Right cardiac atrium (tissue), 5 donors: ENCODE measurements at regions of chr1 and their contacts with region 1.

Region 1: DNA sequence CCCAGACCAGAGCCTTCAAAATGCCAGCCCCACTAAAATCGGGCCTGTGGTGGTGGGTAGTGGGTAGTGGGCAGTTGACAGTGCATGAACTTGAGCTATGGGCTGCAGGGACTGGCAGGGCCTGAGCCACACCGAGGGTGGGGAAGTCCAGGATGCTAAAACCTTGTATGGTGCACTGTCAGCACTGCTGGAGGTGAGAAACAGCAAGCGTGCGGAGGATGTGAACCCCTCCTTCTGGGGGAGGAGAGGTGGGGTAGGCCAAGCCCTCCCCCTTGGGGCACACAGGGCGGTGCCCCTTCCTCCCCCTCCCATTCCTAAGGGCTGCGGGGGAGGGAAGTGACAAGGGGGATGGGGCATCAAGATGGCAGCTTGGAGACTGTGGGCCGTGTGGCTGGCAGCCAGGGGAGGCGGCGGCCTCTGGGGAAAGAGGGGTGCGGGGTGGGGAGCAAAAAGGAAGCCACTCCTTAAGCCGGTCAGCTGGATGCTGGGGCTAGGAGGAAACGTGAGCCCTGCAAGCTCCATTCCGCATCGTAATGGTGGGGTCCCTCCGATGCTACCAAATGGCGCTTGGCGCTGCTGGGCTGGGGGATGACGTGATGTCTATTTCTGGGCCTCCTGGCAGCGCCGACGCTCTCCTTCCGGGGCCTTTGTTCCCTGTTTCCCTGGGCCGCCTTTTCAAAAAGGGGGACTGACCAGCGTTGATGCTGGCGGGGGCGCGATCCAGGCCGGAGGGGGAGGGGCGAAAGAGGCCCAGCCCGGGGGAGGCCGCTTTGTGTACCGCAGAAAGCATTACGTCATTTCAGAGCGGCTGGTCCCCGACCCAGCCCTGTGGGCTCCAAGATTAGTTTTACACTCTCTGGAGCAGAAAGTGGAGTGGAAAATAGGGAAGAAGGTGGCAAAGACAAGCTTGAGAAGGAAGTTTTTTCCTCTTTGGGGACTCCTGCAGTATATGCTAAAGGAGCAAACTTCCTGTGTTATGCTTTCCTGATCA is 809 bp downstream of the SYT11 start:
- DNase-seq: peak; percentile 93 to 96 (median 95)
- ATAC-seq: peak; percentile 72 to 74
- H3K4me3 ChIP-seq: peak overlapping the region; percentile 43
- H3K27ac ChIP-seq: peak overlapping the region; percentile 86
- H3K4me1 ChIP-seq: no peaks in the 10 kb centered on the region
- H3K27me3 ChIP-seq: no peaks in the 10 kb centered on the region

Region 2: DNA sequence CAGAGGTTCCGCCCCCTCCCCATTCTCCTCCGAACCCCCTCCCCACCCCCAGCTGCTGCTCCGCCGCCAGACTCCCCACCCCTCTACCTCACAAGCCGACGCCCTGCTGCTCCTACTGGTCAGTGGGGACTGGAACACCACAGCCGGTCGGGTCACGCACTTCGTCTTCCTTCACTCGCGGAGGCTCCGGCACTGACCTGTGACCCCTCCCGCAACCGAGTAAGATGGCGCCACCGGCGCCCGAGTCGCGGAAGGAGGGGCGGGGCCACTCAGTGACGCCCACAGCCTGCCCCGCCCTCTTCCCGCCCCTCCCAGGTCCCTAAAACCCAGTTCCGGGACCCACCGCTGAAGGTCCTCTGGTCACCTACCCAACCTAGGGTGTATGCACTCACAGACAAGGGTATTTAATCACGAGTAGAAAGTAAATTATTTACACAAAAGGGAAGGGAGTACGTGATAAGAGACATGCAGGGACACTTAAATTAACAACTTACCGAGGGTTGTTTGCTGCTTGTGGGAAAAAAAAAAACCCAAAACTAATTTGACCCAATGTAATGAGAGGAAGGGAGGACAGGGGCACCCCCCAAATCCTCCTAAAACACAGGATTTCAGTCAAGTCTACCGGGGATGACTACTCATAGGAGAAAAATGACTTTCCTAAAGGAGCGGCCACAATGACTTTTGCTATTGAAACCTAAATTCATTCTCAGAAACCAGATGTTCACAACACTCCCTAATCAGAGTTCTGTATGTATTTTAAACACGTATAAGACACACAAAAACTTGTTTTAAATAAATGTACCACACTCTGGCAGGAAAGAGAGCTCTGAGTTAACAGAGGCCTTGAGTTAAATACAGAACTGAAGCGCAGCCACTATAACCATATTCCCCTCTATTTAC is 51.2 kb after region 1 on chr1 and contains the start of gene RIT1:
- intact Hi-C with region 1: loop called in 1 of 4 experiments (anchors 10 kb)
- DNase-seq: peak; percentile 90 to 95 (median 95)
- ATAC-seq: peak; percentile 98
- H3K4me3 ChIP-seq: peak within 1 kb of the TSS; percentile 96
- H3K27ac ChIP-seq: peak within 1 kb of the TSS; percentile 71
- H3K4me1 ChIP-seq: peaks cover 4% of the 10 kb centered on the region
- H3K27me3 ChIP-seq: no peaks in the 10 kb centered on the region
- total RNA-seq, gene RIT1: 21.6 to 26.2 (median 22.5) TPM